WTC11 (cell line): ENCODE measurements at regions of chr5 and their contacts with region 1.

Region 1: GRCh38 chr5:136103118-136103517 is 29.5 kb upstream of the SMAD5 start:
- DNase-seq: no peak
- ATAC-seq: no peak
- H3K4me3 Mint-ChIP-seq: no peak overlapping the region
- H3K27ac Mint-ChIP-seq: no peak overlapping the region
- H3K4me1 Mint-ChIP-seq: peaks cover 32% of the 10 kb centered on the region
- H3K27me3 Mint-ChIP-seq: peaks cover 2% of the 10 kb centered on the region; the same call in 1 of the 2 replicates
- CTCF ChIP-seq: no peak

Region 2: DNA sequence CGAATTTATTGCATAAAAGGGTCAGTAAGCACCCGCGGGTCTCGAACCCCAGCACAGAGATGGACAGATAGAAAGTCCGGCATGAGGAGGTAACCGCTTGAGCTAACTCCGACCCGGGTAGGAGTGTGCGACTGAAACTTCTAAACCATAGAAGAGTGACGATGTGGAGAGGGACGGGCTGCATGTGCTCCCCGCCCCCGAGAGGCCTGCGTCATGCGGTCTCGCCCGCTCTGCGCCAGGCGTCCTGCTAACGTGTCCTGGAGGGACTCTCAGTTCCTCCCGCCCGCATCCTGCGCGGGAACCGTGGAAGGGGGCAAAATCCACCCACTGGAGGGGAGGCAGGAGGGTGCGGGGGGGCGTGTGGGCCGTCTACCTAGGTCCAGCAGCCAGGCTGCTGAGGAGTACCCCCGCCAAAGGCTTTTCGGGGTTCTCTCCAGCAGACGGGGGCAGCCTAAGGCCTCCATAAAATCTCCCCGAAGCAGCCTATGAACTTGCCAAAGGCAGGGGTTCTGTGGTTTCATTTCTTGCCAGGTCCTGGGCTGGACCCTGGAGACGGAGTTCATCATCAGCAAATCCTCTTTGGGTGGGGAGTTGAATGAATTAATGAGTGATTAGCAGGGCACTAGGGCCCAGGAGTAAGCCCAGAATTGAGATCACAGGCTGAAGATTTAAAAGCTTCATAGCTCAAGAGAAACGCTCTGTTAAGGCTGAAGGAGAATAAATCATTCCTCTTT is 22.5 kb before region 1 on chr5:
- CTCF ChIA-PET with region 1: interaction called, 11 read pairs
- POLR2A ChIA-PET with region 1: no interaction called
- DNase-seq: peak; percentile 86
- ATAC-seq: peak; percentile 70
- H3K4me3 Mint-ChIP-seq: peak overlapping the region; percentile 85
- H3K27ac Mint-ChIP-seq: no peak overlapping the region; the same call in 1 of the 2 replicates
- H3K4me1 Mint-ChIP-seq: peaks cover 2% of the 10 kb centered on the region
- H3K27me3 Mint-ChIP-seq: peaks cover 27% of the 10 kb centered on the region
- CTCF ChIP-seq: no peak